ENCODE measurements at regions of chr10 and their contacts with region 1.

Region 1: GRCh38 chr10:52652431-52653262 is 119.9 kb downstream of the MBL2 start:
- DNase-seq: no peak
- ATAC-seq: peak; percentile 44 to 46
- H3K4me3 ChIP-seq: no peak overlapping the region
- H3K27ac ChIP-seq: no peak overlapping the region
- H3K4me1 ChIP-seq: peaks cover 1% of the 10 kb centered on the region
- H3K27me3 ChIP-seq: no peaks in the 10 kb centered on the region

Region 2: GRCh38 chr10:52268790-52269189 is 383.9 kb before region 1 on chr10:
- intact Hi-C with region 1: no loop called
- DNase-seq: no peak
- ATAC-seq: no peak
- H3K4me3 ChIP-seq: no peak overlapping the region
- H3K27ac ChIP-seq: no peak overlapping the region
- H3K4me1 ChIP-seq: no peaks in the 10 kb centered on the region
- H3K27me3 ChIP-seq: no peaks in the 10 kb centered on the region

Region 3: GRCh38 chr10:52313933-52314816 is 338.5 kb before region 1 on chr10 and contains the start of gene DKK1:
- intact Hi-C with region 1: loop called in 2 of 4 experiments (anchors 10 kb)
- DNase-seq: peak; percentile 35 to 78 (median 76)
- ATAC-seq: peak; percentile 75 to 76
- H3K4me3 ChIP-seq: peak within 1 kb of the TSS; percentile 57
- H3K27ac ChIP-seq: no peak within 1 kb of the TSS
- H3K4me1 ChIP-seq: no peaks in the 10 kb centered on the region
- H3K27me3 ChIP-seq: no peaks in the 10 kb centered on the region
- total RNA-seq, gene DKK1: not detected

Region 4: GRCh38 chr10:52729271-52730104 is 76.8 kb after region 1 on chr10:
- intact Hi-C with region 1: loop called in 2 of 4 experiments (anchors 5 to 10 kb)
- DNase-seq: no peak
- ATAC-seq: peak in 1 of 2 donors; percentile 45
- H3K4me3 ChIP-seq: peak overlapping the region; percentile 6
- H3K27ac ChIP-seq: no peak overlapping the region
- H3K4me1 ChIP-seq: no peaks in the 10 kb centered on the region
- H3K27me3 ChIP-seq: no peaks in the 10 kb centered on the region

Measured in right cardiac atrium (tissue), 5 donors.